GM10248 (cell line): ENCODE measurements at regions of chr17 and their contacts with region 1.

Region 1: GRCh38 chr17:64145757-64146417 is 15.9 kb upstream of the ERN1 start:
- DNase-seq: peak; percentile 97
- CTCF ChIP-seq: no peak

Region 2: DNA sequence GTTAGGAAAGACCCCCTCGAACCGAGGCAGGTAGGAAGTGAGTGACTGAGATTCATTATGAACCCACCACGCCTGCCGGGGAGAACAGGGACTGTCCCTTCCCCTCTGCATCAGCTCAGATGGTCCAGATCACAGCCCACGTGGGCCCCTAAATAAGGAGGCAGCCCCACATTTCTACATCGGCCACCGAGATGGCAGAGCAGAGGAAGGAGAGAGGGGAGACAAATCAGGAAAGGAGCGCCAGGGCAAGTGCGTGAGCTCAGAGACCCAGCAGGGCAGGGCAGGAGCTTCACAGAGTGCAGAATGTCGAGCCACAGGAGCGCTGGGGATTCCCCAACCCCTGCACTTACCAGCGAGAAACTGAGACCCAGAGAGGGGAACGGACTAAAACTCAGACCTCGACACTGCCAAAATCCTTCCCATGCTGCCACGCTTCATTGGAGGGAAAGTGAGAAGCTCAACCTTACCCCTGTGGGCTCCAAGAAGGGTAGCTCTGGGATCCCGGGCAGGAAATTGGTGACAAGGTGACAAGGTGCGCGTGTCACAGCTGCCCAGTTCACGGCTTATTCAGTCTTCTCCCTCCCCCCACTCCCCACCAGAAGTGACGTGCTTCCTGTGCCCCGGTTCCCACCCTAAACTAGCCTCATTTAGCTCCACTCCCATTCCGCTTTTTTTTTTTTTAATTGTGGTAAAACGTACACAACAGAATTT is 125.7 kb before region 1 on chr17 and contains the start of gene ICAM2:
- CTCF ChIA-PET with region 1: interaction called, 15 read pairs
- POLR2A ChIA-PET with region 1: interaction called, 11 read pairs
- DNase-seq: peak; percentile 70
- CTCF ChIP-seq: no peak

Region 3: GRCh38 chr17:64073771-64074703 is 71.8 kb before region 1 on chr17:
- CTCF ChIA-PET with region 1: no interaction called
- POLR2A ChIA-PET with region 1: interaction called, 15 read pairs
- DNase-seq: peak; percentile 71
- CTCF ChIP-seq: no peak

Region 4: DNA sequence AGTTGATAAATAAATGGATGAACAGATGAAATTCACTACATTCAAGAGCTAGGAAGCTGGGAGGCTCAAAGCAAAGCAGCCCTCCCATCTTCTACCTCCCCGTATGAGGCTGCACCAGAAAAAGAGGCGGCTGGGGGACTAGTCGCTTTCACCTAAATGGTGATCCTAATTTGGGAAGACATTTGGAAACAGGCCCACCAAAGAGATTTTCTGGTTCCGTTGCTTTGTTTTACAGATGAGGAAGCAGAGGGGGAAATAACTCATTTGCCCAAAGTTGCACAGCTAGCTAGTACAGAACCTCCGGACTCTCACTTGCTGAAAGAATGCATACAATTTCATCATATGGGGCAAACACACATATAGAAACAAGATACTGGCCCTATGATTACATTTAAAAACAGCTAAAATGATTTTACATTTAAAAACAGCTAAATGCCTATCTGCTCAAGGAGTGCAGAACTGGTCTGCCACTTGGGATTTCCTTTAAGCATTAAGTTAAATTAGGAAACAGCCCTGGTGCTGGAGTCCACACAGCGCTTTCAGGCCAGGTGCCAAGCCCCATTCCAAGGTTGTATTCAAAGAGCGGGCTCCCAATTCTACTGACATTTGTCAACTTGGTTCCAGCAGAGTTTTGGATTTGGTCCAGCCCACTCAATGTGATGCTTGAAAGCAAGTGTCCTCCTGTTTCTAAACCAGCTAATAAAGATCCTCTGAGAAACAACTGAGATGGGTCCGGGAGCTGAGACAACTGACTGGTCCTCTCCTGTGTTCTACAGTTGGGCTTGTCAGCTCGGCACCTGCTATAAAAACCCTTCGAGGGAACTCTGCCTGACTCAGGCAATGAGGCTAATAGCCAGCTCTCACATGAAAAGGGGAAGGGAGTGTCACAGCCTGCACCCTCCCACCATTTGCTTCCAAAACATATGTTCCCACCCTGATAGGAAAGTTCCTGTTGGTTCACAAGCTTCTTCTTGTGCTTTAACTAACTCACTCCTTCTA is 27.6 kb before region 1 on chr17:
- CTCF ChIA-PET with region 1: no interaction called
- POLR2A ChIA-PET with region 1: interaction called, 15 read pairs
- DNase-seq: no peak
- CTCF ChIP-seq: no peak

Region 5: GRCh38 chr17:64166876-64167275 is 21.0 kb after region 1 on chr17:
- CTCF ChIA-PET with region 1: interaction called, 4 read pairs
- POLR2A ChIA-PET with region 1: interaction called, 12 read pairs
- DNase-seq: no peak
- CTCF ChIP-seq: no peak

Region 6: DNA sequence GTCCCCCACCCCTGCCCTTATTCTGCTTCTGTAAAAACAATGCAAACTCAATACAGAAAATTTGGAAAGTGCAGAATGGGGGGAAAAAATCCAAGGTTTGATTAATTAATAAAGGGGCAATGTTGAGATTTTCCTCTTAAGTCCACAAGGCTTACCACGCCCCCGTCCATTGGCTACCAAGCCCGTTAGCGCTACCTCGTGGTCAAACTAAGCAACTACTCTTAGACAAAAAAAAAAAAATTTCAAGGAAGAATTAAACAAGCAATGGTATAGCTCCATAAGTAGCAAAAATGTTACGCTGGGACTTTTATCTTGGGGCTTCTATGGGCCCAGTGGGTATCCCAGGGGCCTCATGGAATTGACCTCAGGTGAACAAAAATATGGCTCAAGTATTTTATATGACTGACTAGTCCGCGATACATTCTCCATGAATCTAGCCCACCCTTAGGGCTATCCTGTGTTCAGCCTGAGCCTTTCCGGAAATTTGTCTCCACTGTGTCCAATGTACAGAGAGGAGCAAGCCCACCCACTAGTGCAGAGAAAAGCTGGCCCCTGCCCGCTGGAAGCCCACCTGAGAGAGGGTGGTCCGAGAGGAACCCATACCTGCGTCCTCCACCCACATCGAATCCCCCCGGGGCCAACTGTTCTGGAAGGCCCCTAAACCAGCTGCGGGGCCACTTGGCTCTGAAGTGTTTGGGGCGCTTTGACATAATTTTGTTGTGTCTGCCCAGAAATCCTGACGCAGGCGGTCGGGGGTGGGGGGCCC is 136.3 kb after region 1 on chr17:
- CTCF ChIA-PET with region 1: interaction called, 21 read pairs
- POLR2A ChIA-PET with region 1: interaction called, 6 read pairs
- DNase-seq: peak; percentile 72
- CTCF ChIP-seq: peak; percentile 75

Region 7: DNA sequence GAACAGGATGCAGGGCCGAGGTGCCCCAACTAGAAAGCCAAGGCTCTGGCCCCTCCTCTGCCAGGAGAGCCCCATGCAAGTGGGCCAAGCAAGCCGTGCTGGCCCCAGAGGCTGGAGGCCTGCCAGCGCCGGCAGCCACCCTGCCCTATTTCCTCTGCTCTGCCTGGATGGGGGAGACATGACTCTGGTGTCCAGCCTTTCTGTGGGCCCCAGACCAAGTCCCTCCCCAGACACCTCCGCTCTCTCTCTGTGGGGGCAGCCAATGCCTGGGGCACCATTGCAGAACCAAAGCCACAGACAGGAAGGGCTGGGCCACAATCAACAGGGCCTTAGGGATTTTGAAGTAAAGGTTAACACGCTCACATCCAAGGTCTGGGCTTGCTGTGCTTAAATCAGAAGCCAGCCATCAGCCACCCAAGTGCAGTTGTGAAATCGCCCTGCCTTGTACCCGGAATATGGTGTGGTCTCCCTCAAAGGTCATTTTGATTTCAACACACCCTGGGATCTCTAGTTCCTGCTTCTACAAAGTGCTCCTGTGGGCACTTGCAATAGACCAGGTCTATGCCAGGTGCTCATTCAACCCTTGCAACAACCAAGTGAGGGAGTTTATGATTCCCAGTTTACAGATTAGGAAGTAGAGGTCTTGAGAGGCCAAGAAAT is 180.6 kb after region 1 on chr17:
- CTCF ChIA-PET with region 1: no interaction called
- POLR2A ChIA-PET with region 1: no interaction called
- DNase-seq: no peak
- CTCF ChIP-seq: no peak